Gastrocnemius medialis (tissue), 4 donors: ENCODE measurements at regions of chr5 and their contacts with region 1.

Region 1: DNA sequence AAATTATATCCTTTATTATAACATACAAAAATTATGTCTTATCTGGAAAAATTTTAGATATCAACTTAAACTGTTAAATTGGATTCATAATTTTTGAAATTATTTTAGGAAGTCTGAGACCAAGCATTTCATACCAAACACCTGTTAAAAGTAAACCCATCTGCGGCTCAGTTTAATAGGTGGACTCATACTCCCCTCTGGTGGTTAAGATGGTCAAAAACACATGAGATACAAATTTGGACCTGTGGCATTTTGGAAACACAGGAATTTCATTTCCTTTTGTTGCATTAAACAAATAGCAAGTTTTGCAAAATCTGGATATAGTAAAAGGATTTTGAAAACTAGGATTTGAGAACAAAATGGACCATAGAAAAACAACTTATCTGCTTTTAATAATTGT is 53.7 kb downstream of the RGMB start:
- DNase-seq: no peak
- ATAC-seq: no peak
- H3K4me3 ChIP-seq: no peak overlapping the region
- H3K27ac ChIP-seq: no peak overlapping the region
- H3K4me1 ChIP-seq: no peaks in the 10 kb centered on the region
- H3K27me3 ChIP-seq: no peaks in the 10 kb centered on the region
- CTCF ChIP-seq: peak; percentile 39 to 58 (median 49)
- POLR2A ChIP-seq: no peak

Region 2: GRCh38 chr5:97231025-97231636 is 1596.0 kb before region 1 on chr5:
- in situ Hi-C with region 1: loop called in 1 of 4 experiments (anchors 25 kb)
- intact Hi-C with region 1: loop called (anchors 2 kb)
- DNase-seq: peak in 1 of 2 donors; percentile 20
- ATAC-seq: peak; percentile 78 to 87
- H3K4me3 ChIP-seq: no peak overlapping the region
- H3K27ac ChIP-seq: no peak overlapping the region
- H3K4me1 ChIP-seq: no peaks in the 10 kb centered on the region
- H3K27me3 ChIP-seq: no peaks in the 10 kb centered on the region
- CTCF ChIP-seq: peak; percentile 40 to 73 (median 64)
- POLR2A ChIP-seq: no peak

Region 3: GRCh38 chr5:98663521-98663920 is 163.6 kb before region 1 on chr5:
- in situ Hi-C with region 1: no loop called
- intact Hi-C with region 1: no loop called
- DNase-seq: no peak
- ATAC-seq: no peak
- H3K4me3 ChIP-seq: no peak overlapping the region
- H3K27ac ChIP-seq: no peak overlapping the region
- H3K4me1 ChIP-seq: no peaks in the 10 kb centered on the region
- H3K27me3 ChIP-seq: no peaks in the 10 kb centered on the region
- CTCF ChIP-seq: no peak
- POLR2A ChIP-seq: no peak

Region 4: DNA sequence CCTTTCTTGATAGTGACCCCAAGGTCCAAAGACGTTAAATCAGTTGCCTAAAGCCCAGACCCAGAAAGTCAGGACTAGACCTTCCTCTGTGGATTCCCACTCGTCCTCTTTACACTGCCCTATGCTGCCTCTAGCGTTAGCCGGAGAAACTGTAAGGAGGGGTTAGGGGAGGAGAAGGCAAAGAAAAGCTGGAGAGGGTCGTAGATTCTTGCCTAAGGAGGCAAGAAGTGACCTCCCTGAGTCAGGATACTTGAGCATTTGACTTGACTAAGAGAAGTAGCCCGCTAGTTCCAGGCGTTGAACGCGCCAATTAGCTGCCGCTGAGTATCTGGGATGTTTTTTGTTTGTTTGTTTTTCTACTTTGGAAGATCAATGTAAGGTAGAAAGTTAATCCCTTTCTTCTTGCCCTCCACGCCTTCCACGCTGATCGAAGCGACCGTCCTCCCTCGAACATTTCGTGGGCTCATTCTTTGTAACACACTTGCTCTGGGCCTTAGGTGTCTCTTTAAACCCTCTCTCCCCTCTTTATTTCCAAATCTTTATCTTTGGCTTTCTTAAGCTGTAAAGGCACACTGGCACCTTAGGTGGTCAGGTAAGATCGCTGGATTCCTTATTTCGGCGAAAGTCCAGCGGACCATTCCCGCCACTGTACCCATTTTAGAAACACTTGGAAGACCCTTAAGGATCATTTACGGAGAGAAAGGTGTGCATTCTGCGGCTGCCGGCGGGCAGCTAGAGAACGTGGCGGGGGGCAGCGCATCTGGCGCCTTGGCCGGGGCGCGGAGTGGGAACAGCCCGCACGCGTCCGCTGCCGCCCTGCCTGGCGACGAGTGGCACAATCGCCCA is 58.8 kb before region 1 on chr5:
- in situ Hi-C with region 1: no loop called
- intact Hi-C with region 1: loop called (anchors 5 kb)
- DNase-seq: peak in 1 of 2 donors; percentile 9
- ATAC-seq: peak; percentile 21 to 23
- H3K4me3 ChIP-seq: peak overlapping the region; percentile 68 to 86 (median 74)
- H3K27ac ChIP-seq: peak overlapping the region; percentile 77 to 97 (median 88)
- H3K4me1 ChIP-seq: peaks cover 8 to 13% of the 10 kb centered on the region in 2 donors
- H3K27me3 ChIP-seq: peaks cover 0 to 2% (median 0%) of the 10 kb centered on the region in 3 donors
- CTCF ChIP-seq: peak; percentile 49 to 87 (median 69)
- POLR2A ChIP-seq: no peak

Region 5: GRCh38 chr5:98786191-98786853 is 40.8 kb before region 1 on chr5:
- in situ Hi-C with region 1: no loop called
- intact Hi-C with region 1: loop called (anchors 2 kb)
- DNase-seq: no peak
- ATAC-seq: no peak
- H3K4me3 ChIP-seq: no peak overlapping the region
- H3K27ac ChIP-seq: peak overlapping the region; percentile 67 to 75 (median 72)
- H3K4me1 ChIP-seq: peaks cover 79 to 88% of the 10 kb centered on the region in 2 donors
- H3K27me3 ChIP-seq: no peaks in the 10 kb centered on the region
- CTCF ChIP-seq: no peak
- POLR2A ChIP-seq: no peak

Region 6: DNA sequence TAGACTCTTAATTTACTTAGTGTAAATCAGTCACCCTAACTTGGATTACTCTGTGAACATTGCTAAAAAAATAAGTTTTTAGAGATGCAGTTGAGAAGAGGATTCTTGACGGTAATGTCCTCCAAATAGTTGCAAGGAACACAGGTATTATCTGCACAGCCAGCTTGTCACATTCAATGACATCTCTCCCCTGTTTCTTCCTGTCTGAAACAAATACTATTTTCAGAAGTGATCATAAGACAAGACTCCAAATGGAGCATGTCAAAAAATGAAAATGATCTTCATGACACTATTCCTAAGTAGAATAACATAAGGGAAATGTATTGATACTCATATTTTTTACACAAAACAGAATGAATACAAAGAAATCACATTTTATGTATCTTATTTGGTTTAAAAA is 329.5 kb after region 1 on chr5:
- in situ Hi-C with region 1: no loop called
- intact Hi-C with region 1: no loop called
- DNase-seq: no peak
- ATAC-seq: no peak
- H3K4me3 ChIP-seq: no peak overlapping the region
- H3K27ac ChIP-seq: no peak overlapping the region
- H3K4me1 ChIP-seq: no peaks in the 10 kb centered on the region
- H3K27me3 ChIP-seq: no peaks in the 10 kb centered on the region
- CTCF ChIP-seq: no peak
- POLR2A ChIP-seq: no peak